Mammary epithelial cell (primary cell): ENCODE measurements at regions of chr6 and their contacts with region 1.

Region 1: DNA sequence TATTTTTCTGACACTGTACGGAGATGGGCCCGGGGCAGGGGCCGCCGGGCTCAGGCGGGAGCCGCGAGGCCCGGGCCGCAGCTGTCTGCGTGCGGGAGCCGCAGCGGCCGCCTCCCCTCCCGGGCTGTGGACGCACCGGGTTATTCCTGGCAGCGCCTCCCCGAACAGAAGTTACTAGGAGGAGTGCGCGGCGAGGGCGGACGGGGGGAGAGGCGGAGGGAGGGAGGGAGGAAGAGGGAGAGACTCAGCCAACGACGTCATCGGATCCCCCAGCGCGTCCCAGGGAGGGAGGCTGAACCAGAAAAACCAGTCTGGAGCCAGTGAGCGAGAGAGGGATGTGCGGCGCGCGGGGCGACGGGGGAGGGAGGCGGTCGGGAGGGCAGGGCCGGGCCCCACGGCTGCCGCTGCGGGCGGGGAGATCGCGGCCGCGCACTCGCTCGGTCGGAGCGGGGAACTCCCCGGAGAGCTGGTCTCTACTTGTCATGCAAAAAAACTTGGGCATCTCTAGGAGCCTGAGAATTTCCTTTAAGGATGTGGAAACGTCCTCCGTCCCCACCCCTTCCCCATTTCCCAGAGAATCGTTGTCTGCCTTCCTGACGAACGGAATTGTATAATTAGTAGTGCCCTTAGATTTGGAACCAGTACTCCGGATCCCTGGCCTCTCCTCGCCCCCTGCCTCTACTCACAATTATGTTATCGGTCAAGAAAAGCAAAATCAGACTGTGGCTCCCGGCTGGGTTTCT is 1.4 kb upstream of the HIVEP2 start:
- DNase-seq: peak; percentile 99
- H3K4me3 ChIP-seq: peak overlapping the region; percentile 79 to 91 (median 86)
- H3K27ac ChIP-seq: peak overlapping the region; percentile 98
- H3K4me1 ChIP-seq: peaks cover 10% of the 10 kb centered on the region
- H3K27me3 ChIP-seq: no peaks in the 10 kb centered on the region
- CTCF ChIP-seq: no peak

Region 2: GRCh38 chr6:142566628-142567396 is 379.5 kb before region 1 on chr6:
- CTCF ChIA-PET with region 1: no interaction called
- dilution Hi-C with region 1: no loop called
- in situ Hi-C with region 1: no loop called
- intact Hi-C with region 1: loop called (anchors 5 kb)
- DNase-seq: peak; percentile 52
- H3K4me3 ChIP-seq: no peak overlapping the region
- H3K27ac ChIP-seq: no peak overlapping the region
- H3K4me1 ChIP-seq: peaks cover 35% of the 10 kb centered on the region
- H3K27me3 ChIP-seq: no peaks in the 10 kb centered on the region
- CTCF ChIP-seq: peak; percentile 95 to 99

Region 3: GRCh38 chr6:142802124-142802523 is 144.2 kb before region 1 on chr6:
- CTCF ChIA-PET with region 1: no interaction called
- dilution Hi-C with region 1: no loop called
- in situ Hi-C with region 1: no loop called
- intact Hi-C with region 1: loop called (anchors 1 kb)
- DNase-seq: peak; percentile 98
- H3K4me3 ChIP-seq: no peak overlapping the region
- H3K27ac ChIP-seq: peak overlapping the region; percentile 78
- H3K4me1 ChIP-seq: peaks cover 9% of the 10 kb centered on the region
- H3K27me3 ChIP-seq: no peaks in the 10 kb centered on the region
- CTCF ChIP-seq: no peak

Region 4: GRCh38 chr6:142902636-142903053 is 43.7 kb before region 1 on chr6:
- CTCF ChIA-PET with region 1: no interaction called
- dilution Hi-C with region 1: no loop called
- in situ Hi-C with region 1: no loop called
- intact Hi-C with region 1: loop called (anchors 1 kb)
- DNase-seq: peak; percentile 97
- H3K4me3 ChIP-seq: peak overlapping the region in 1 of 3 experiments; percentile 32
- H3K27ac ChIP-seq: peak overlapping the region; percentile 97
- H3K4me1 ChIP-seq: peaks cover 32% of the 10 kb centered on the region
- H3K27me3 ChIP-seq: no peaks in the 10 kb centered on the region
- CTCF ChIP-seq: no peak

Region 5: GRCh38 chr6:143060354-143060805 is 114.0 kb after region 1 on chr6:
- CTCF ChIA-PET with region 1: no interaction called
- dilution Hi-C with region 1: no loop called
- in situ Hi-C with region 1: loop called (anchors 10 kb)
- intact Hi-C with region 1: loop called (anchors 1 kb)
- DNase-seq: peak; percentile 82
- H3K4me3 ChIP-seq: peak overlapping the region; percentile 65 to 88 (median 66)
- H3K27ac ChIP-seq: peak overlapping the region; percentile 98
- H3K4me1 ChIP-seq: peaks cover 47% of the 10 kb centered on the region
- H3K27me3 ChIP-seq: no peaks in the 10 kb centered on the region
- CTCF ChIP-seq: peak in 1 of 2 donors; percentile 32

Region 6: DNA sequence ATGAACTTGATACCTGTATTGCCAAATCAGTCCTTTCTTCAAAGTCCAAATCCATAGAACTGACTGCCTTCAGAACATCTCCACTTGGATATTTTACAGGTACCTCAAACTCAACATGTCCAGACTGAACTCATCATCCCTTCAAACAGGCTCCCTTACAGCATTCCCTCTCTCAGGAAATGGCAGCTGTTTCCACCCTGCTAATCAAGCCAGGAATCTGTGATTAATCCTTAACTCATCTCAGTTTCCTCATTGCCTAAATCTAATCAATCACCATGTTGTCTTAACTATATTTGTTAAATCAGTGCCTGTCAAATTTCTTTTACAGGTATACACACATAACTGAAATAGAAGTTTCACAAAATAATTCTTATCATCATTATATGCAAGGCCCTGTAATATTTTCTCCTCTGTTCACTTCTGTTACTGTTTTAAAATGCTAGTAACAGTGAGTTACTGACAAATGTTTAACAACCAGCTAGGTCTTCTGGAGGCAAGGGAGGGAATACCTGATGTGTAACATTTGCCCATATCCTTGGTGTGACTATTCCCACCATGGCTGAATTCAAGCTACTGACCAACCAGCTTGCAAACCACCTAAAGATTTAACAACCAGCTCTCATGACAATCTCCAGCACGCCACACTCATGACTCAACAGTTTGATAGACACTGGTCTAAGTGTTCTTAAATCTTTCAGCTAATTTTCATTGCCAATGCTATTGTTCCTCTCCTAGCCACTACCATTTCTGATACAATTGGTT is 379.2 kb after region 1 on chr6:
- CTCF ChIA-PET with region 1: no interaction called
- dilution Hi-C with region 1: no loop called
- in situ Hi-C with region 1: no loop called
- intact Hi-C with region 1: loop called (anchors 5 kb)
- DNase-seq: peak; percentile 92
- H3K4me3 ChIP-seq: no peak overlapping the region
- H3K27ac ChIP-seq: peak overlapping the region; percentile 98
- H3K4me1 ChIP-seq: peaks cover 63% of the 10 kb centered on the region
- H3K27me3 ChIP-seq: no peaks in the 10 kb centered on the region
- CTCF ChIP-seq: no peak